ENCODE measurements at regions of chr6 and their contacts with region 1.

Region 1: GRCh38 chr6:34154668-34155447 is 9.0 kb upstream of the GRM4 start:
- DNase-seq: peak; percentile 26
- ATAC-seq: peak; percentile 97
- H3K4me3 ChIP-seq: no peak overlapping the region
- H3K27ac ChIP-seq: no peak overlapping the region
- H3K4me1 ChIP-seq: no peaks in the 10 kb centered on the region
- H3K27me3 ChIP-seq: peaks cover 61% of the 10 kb centered on the region
- CTCF ChIP-seq: peak; percentile 96
- POLR2A ChIP-seq: 0 out of 2 replicates have a peak, but pooled peaks have one; percentile 47
- RAD21 ChIP-seq: peak; percentile 97

Region 2: DNA sequence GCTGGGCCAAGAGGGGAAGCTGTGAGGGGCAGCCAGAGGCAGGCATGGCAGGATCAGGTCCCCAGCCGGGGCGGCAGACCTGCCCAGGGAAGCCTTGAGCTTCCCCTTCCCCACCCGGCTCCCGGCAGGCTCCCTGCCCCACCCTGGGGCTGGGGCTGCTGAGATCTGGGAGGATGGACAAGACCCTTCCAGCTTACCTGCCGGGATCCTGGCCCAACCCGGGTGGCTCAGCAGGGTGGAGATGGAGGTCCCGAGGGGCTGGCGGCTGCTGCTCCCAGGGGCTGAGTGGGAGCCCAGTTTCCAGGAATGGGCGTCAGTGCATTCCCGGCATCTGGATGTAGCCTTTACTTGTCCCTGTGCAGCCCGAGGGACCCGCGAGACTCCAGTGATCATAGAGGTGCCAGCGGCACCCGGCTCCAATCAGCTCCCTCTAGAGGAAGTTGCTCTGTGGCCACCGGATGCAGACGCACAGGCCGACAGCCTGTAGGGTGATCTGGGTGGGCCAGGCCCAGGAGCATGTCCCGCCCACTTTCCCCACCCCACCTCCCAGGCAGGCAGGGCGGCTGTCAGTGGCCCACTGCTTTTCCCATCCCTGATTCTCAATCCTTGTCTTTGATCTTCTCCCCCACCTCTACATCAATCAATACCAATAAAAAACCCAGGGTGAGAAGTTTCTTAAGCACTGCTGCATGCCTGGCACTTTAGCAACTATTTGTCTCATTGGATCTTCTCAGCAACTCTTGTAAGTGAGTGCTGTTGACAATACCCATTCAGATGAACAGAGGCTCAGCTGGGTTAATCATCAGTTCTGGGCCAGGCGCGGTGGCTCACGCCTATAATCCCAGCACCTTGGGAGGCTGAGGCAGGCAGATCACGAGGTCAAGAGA is 574.8 kb before region 1 on chr6 and contains the start of gene BAK1:
- CTCF ChIA-PET with region 1: no interaction called
- POLR2A ChIA-PET with region 1: no interaction called
- dilution Hi-C with region 1: no loop called
- in situ Hi-C with region 1: loop called (anchors 10 kb)
- intact Hi-C with region 1: no loop called
- DNase-seq: peak; percentile 89
- ATAC-seq: peak; percentile 99
- H3K4me3 ChIP-seq: peak within 1 kb of the TSS; percentile 91
- H3K27ac ChIP-seq: peak within 1 kb of the TSS; percentile 80
- H3K4me1 ChIP-seq: peaks cover 6% of the 10 kb centered on the region
- H3K27me3 ChIP-seq: no peaks in the 10 kb centered on the region
- CTCF ChIP-seq: peak; percentile 55
- POLR2A ChIP-seq: peak; percentile 54; the same call in 1 of the 2 replicates
- RAD21 ChIP-seq: peak; percentile 26; the same call in 1 of the 2 replicates
- total RNA-seq, gene BAK1: 12.0 and 12.5 TPM in 2 replicates

Region 3: DNA sequence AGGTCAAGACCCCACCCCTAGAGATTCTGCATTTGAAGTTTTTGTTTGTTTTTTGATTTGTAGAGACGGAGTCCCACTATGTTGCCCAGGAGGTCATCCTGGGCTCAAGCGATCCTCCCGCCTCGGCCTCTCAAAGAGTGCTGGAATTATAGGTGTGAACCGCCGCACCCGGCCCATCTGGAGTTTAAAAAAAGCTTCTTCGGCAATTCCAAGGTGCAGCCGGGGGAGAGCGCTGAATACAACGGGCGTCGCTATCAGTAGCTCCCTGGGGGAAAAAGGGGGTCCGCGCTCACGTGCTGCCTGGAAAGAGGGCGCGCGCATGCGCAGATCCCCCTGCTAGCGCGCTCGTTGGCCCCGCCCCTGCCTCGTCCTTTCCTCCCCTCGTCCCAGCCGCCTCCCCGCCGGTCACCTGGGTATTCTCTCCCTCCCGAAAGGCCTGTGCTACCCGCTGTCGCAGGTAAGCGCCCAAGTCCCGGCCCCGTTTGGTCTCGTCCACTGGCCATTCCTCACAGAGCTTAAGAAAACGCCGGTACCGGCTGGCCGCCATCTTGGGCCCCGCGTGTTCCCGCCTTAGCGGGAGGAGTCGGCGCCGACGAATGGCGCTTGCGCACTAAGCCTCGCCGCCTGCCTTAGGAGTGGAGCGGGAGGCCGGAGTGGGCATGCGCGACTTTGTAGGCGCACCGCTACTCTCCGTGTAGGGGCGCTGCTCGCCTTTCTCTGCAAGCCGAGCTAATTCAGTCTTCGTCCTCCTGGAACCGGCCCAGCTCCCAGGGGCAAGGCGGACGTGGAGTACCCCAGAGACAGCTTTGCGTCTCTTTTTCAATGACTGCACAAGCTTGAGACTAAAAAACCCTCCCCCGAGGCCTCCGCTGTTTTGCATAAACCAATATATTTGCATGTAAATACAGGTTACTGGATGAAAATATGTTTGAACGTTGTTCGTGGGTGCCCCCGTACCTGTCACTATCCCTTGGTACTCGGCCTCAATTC is 443.4 kb before region 1 on chr6 and contains the start of gene UQCC2:
- CTCF ChIA-PET with region 1: interaction called, 4 read pairs
- POLR2A ChIA-PET with region 1: no interaction called
- dilution Hi-C with region 1: no loop called
- in situ Hi-C with region 1: loop called (anchors 10 kb)
- intact Hi-C with region 1: loop called (anchors 1 kb)
- DNase-seq: peak; percentile 95
- ATAC-seq: peak; percentile 99
- H3K4me3 ChIP-seq: peak within 1 kb of the TSS; percentile 73
- H3K27ac ChIP-seq: peak within 1 kb of the TSS; percentile 95
- H3K4me1 ChIP-seq: peaks cover 5% of the 10 kb centered on the region
- H3K27me3 ChIP-seq: peaks cover 5% of the 10 kb centered on the region; the same call in 1 of the 2 replicates
- CTCF ChIP-seq: peak; percentile 90
- POLR2A ChIP-seq: peak; percentile 95
- RAD21 ChIP-seq: peak; percentile 86
- total RNA-seq, gene UQCC2: 13.8 and 23.1 TPM in 2 replicates

Region 4: GRCh38 chr6:33744001-33744848 is 410.6 kb before region 1 on chr6:
- CTCF ChIA-PET with region 1: interaction called, 3 read pairs
- POLR2A ChIA-PET with region 1: no interaction called
- dilution Hi-C with region 1: no loop called
- in situ Hi-C with region 1: no loop called
- intact Hi-C with region 1: loop called (anchors 1 kb)
- DNase-seq: peak; percentile 70
- ATAC-seq: peak; percentile 61
- H3K4me3 ChIP-seq: no peak overlapping the region
- H3K27ac ChIP-seq: no peak overlapping the region
- H3K4me1 ChIP-seq: peaks cover 22% of the 10 kb centered on the region
- H3K27me3 ChIP-seq: peaks cover 6% of the 10 kb centered on the region; the same call in 1 of the 2 replicates
- CTCF ChIP-seq: peak; percentile 95
- POLR2A ChIP-seq: no peak
- RAD21 ChIP-seq: peak; percentile 91

Region 5: GRCh38 chr6:34055223-34055933 is 99.5 kb before region 1 on chr6:
- CTCF ChIA-PET with region 1: interaction called, 3 read pairs
- POLR2A ChIA-PET with region 1: no interaction called
- dilution Hi-C with region 1: no loop called
- in situ Hi-C with region 1: no loop called
- intact Hi-C with region 1: loop called (anchors 1 kb)
- DNase-seq: peak; percentile 51
- ATAC-seq: peak; percentile 74
- H3K4me3 ChIP-seq: no peak overlapping the region
- H3K27ac ChIP-seq: no peak overlapping the region
- H3K4me1 ChIP-seq: no peaks in the 10 kb centered on the region
- H3K27me3 ChIP-seq: peaks cover 45% of the 10 kb centered on the region
- CTCF ChIP-seq: peak; percentile 68
- POLR2A ChIP-seq: no peak
- RAD21 ChIP-seq: peak; percentile 48

Region 6: GRCh38 chr6:34170346-34170745 is 15.5 kb after region 1 on chr6:
- CTCF ChIA-PET with region 1: no interaction called
- POLR2A ChIA-PET with region 1: no interaction called
- dilution Hi-C with region 1: no loop called
- in situ Hi-C with region 1: no loop called
- intact Hi-C with region 1: no loop called
- DNase-seq: peak; percentile 8
- ATAC-seq: no peak
- H3K4me3 ChIP-seq: no peak overlapping the region
- H3K27ac ChIP-seq: no peak overlapping the region
- H3K4me1 ChIP-seq: no peaks in the 10 kb centered on the region
- H3K27me3 ChIP-seq: peaks cover 7% of the 10 kb centered on the region
- CTCF ChIP-seq: no peak
- POLR2A ChIP-seq: no peak
- RAD21 ChIP-seq: no peak

Region 7: DNA sequence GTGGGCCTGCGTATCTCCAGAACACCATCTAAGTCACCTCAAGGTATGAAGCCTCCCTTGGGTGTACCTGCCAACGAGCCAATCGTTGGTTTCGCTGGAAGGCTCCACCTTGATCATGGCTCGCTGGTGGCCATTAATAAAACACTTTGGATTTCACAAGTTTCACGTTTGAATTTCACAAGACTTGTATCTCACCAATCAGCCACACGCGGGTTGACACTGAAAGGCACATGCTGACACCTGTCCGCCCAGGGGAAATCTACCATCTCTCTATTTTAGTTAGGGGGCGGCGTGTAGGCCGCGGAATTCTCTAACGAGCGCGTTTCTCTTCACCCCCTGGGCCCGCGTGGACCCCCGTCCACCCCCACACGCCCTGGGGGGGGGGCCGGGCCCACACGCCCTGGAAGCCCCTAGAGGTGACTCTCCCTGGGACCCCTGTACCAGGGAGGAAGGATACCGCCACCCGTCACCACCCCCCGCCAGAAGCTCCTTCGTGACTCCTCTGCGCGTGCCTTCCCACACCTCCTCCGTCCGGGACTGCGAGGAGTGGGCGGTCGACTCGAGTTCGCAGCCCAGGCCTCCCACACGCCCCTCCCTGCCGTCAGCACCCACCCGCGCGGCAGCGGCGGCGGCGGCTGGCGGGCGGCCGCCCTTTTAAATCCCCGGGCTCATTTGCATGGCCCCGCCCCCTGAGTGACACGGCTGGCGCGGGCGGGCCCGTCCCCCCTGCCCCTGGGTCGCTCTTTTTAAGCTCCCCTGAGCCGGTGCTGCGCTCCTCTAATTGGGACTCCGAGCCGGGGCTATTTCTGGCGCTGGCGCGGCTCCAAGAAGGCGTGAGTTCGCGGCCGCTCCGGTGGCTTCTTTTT is 81.5 kb after region 1 on chr6 and contains the start of gene HMGA1:
- CTCF ChIA-PET with region 1: no interaction called
- POLR2A ChIA-PET with region 1: no interaction called
- dilution Hi-C with region 1: no loop called
- in situ Hi-C with region 1: no loop called
- intact Hi-C with region 1: no loop called
- DNase-seq: peak; percentile 86
- ATAC-seq: peak; percentile 78
- H3K4me3 ChIP-seq: peak within 1 kb of the TSS; percentile 76
- H3K27ac ChIP-seq: peak within 1 kb of the TSS; percentile 78
- H3K4me1 ChIP-seq: peaks cover 16% of the 10 kb centered on the region
- H3K27me3 ChIP-seq: no peaks in the 10 kb centered on the region
- CTCF ChIP-seq: no peak
- POLR2A ChIP-seq: peak; percentile 97
- RAD21 ChIP-seq: no peak
- total RNA-seq, gene HMGA1: 101 and 129 TPM in 2 replicates

Region 8: GRCh38 chr6:34602318-34603111 is 447.7 kb after region 1 on chr6:
- CTCF ChIA-PET with region 1: no interaction called
- POLR2A ChIA-PET with region 1: no interaction called
- dilution Hi-C with region 1: no loop called
- in situ Hi-C with region 1: no loop called
- intact Hi-C with region 1: no loop called
- DNase-seq: peak; percentile 28
- ATAC-seq: peak; percentile 33; the same call in 1 of the 2 replicates
- H3K4me3 ChIP-seq: no peak overlapping the region
- H3K27ac ChIP-seq: no peak overlapping the region
- H3K4me1 ChIP-seq: peaks cover 10% of the 10 kb centered on the region
- H3K27me3 ChIP-seq: no peaks in the 10 kb centered on the region
- CTCF ChIP-seq: no peak
- POLR2A ChIP-seq: no peak
- RAD21 ChIP-seq: no peak

Region 9: GRCh38 chr6:35139908-35140655 is 985.2 kb after region 1 on chr6:
- CTCF ChIA-PET with region 1: no interaction called
- POLR2A ChIA-PET with region 1: no interaction called
- dilution Hi-C with region 1: no loop called
- in situ Hi-C with region 1: loop called (anchors 25 kb)
- intact Hi-C with region 1: no loop called
- DNase-seq: peak; percentile 82
- ATAC-seq: peak; percentile 72
- H3K4me3 ChIP-seq: no peak overlapping the region
- H3K27ac ChIP-seq: no peak overlapping the region
- H3K4me1 ChIP-seq: peaks cover 2% of the 10 kb centered on the region; the same call in 1 of the 2 replicates
- H3K27me3 ChIP-seq: no peaks in the 10 kb centered on the region
- CTCF ChIP-seq: peak; percentile 90
- POLR2A ChIP-seq: no peak; the same call in 1 of the 2 replicates
- RAD21 ChIP-seq: peak; percentile 98

Region 10: DNA sequence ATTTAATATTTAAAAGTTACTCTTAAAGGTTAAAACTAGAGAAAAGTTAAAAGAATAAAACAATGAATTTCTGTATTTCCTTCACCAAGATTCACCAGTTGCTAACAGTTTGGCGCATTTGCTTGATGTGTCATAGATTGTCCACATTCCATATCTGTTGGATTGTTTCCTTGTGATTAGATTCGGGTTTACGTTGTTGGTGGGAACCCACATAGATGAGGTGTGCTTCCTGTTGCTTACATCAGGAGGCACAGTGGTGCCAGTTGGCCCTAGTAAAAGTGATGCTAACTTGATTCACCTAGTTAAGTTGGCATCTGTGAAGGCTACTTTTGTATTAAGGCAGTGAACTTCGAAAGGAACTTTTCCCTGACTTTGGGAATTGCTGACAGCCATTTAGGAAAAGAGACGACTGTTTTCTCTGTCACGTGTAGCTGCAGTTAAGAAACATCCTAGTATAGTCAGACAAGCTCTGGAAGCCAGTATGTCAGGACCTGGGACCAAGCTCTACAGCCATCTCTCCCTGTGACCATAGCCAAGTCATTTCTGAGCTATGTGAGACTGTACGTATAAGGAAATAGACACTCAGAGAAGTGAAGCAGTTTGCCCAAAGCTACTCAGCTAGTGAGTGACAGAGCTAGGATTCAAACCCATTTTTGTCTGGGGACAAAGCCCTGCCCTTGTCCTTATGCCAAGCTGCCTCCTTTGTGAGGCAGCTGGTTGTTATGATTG is 1236.5 kb after region 1 on chr6:
- CTCF ChIA-PET with region 1: no interaction called
- POLR2A ChIA-PET with region 1: no interaction called
- dilution Hi-C with region 1: no loop called
- in situ Hi-C with region 1: no loop called
- intact Hi-C with region 1: no loop called
- DNase-seq: peak; percentile 97
- ATAC-seq: peak; percentile 82
- H3K4me3 ChIP-seq: no peak overlapping the region
- H3K27ac ChIP-seq: peak overlapping the region; percentile 90
- H3K4me1 ChIP-seq: peaks cover 40% of the 10 kb centered on the region
- H3K27me3 ChIP-seq: no peaks in the 10 kb centered on the region
- CTCF ChIP-seq: 0 out of 2 replicates have a peak, but pooled peaks have one; percentile 24
- POLR2A ChIP-seq: peak; percentile 44; the same call in 1 of the 2 replicates
- RAD21 ChIP-seq: peak; percentile 28; the same call in 1 of the 2 replicates